ENCODE measurements at regions of chr1 and their contacts with region 1.

Region 1: GRCh38 chr1:184664042-184664655 is 90.5 kb downstream of the EDEM3 start:
- DNase-seq: peak; percentile 77
- CTCF ChIP-seq: peak; percentile 93

Region 2: DNA sequence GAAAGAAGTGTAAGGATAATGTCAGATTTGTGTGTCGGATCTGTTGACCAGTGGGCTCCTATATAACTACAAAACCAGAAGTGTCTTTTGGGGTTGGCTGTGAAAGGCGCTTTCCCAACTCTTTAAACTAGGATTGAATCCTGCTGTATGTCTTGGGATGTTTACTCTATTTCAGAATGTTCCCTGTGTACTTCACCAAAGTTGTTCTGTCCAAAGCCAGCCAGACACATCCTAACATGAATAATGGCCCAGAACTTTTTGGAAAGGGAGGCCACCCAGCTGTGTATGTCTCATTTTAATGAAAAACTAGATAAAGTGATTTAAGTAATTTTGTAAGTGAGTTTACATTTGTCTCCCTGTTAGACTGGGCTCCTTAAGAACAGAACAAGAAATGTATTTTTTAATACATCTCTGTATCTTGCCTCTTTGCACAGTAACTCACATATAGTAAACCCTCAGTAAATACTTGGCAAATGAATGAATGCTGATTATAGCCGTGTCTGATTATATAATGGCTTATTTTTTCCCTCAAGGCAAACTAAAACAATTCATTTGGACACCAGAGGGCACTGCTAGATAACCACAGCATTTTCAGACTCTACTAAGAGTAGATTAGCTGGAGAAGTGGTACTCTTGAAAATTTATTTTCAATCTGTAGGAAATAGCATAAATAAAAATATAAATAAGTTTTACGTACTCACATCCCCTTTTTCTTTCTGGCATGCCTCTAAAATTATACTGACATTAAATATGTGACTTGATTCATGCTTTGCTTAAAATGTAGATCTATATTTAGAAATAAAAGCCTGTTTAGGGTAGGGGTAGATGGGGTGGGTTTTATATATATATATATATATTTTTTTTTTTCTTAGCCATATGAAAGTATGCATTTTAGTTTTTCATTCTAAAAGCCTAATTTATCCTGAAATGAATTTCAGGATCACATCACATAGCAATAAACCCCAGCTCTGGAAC is 588.8 kb before region 1 on chr1:
- CTCF ChIA-PET with region 1: interaction called, 13 read pairs
- POLR2A ChIA-PET with region 1: no interaction called
- DNase-seq: peak; percentile 29
- CTCF ChIP-seq: peak; percentile 55

Region 3: GRCh38 chr1:184310157-184310806 is 353.9 kb before region 1 on chr1:
- CTCF ChIA-PET with region 1: interaction called, 10 read pairs
- POLR2A ChIA-PET with region 1: no interaction called
- DNase-seq: no peak
- CTCF ChIP-seq: no peak

Region 4: DNA sequence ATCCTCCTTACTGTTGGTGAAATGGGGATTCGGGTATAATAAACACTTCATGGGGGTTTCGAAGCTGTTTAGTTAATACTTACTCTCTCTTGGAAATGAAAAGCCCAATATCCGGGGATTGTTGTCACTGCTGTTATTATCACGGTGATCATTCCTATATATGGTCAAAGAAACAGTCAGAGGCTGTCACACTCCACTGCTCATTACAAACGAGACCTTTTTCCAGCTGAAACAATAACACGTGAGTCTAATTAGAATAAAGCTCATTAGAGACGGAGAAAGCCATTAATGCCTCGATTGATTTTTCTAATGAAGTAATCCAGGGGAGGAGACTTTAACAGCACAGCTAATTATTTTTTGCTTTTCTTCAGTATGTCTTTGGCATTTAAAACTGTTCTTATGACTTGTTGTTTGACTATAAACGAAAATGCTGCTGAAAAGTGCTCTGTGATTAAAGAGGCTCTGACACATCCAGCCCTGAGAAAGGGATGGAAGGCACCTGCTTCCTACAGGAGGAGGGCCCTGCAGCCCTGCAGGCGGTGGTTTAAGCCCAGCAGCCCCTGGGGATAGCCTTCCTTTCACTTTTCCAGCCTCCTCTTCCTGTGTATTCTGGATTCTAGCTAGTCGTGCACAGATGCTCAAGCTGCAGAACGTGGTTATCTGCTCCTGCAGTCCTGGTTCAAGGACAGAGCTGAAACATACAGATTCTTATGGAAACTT is 53.1 kb before region 1 on chr1:
- CTCF ChIA-PET with region 1: no interaction called
- POLR2A ChIA-PET with region 1: no interaction called
- DNase-seq: no peak
- CTCF ChIP-seq: no peak

Region 5: GRCh38 chr1:184641894-184642293 is 22.3 kb before region 1 on chr1:
- CTCF ChIA-PET with region 1: interaction called, 28 read pairs
- POLR2A ChIA-PET with region 1: no interaction called
- DNase-seq: no peak
- CTCF ChIP-seq: no peak

Region 6: GRCh38 chr1:184649451-184649888 is 14.7 kb before region 1 on chr1:
- CTCF ChIA-PET with region 1: interaction called, 62 read pairs
- POLR2A ChIA-PET with region 1: no interaction called
- DNase-seq: peak; percentile 66
- CTCF ChIP-seq: no peak

Region 7: DNA sequence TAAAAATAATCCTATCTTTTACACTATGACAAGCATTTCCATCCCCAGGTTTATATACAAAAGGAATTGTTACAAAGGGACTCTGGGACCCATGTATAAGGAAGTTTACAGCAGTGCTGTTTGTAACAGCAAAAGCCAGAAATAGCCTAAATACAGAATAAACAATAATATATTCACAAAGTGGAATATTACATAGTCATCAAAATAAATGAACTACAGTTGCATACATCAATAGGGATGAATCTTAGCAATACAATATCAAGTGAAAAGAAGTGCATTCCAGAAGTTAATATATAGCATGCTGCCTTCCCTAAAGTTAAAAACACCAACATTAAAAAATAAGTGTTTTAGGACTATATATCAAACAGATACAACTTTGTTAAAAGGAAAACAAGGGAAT is 13.2 kb after region 1 on chr1:
- CTCF ChIA-PET with region 1: interaction called, 20 read pairs
- POLR2A ChIA-PET with region 1: no interaction called
- DNase-seq: no peak
- CTCF ChIP-seq: no peak